CD8-positive, alpha-beta T cell (primary cell): ENCODE measurements at regions of chr11 and their contacts with region 1.

Region 1: GRCh38 chr11:42596576-42597145 is 715.1 kb upstream of the API5 start:
- DNase-seq: no peak
- ATAC-seq: no peak
- H3K4me3 ChIP-seq: no peak overlapping the region
- H3K4me3 Mint-ChIP-seq: no peak overlapping the region
- H3K27ac ChIP-seq: no peak overlapping the region
- H3K27ac Mint-ChIP-seq: no peak overlapping the region
- H3K4me1 ChIP-seq: no peaks in the 10 kb centered on the region
- H3K4me1 Mint-ChIP-seq: no peaks in the 10 kb centered on the region
- H3K27me3 ChIP-seq: no peaks in the 10 kb centered on the region
- H3K27me3 Mint-ChIP-seq: no peaks in the 10 kb centered on the region
- CTCF ChIP-seq: no peak

Region 2: GRCh38 chr11:42552786-42553185 is 43.9 kb before region 1 on chr11:
- CTCF ChIA-PET with region 1: no interaction called
- POLR2A ChIA-PET with region 1: no interaction called
- intact Hi-C with region 1: loop called in 1 of 2 experiments (anchors 5 kb)
- DNase-seq: no peak
- ATAC-seq: no peak
- H3K4me3 ChIP-seq: no peak overlapping the region
- H3K4me3 Mint-ChIP-seq: no peak overlapping the region
- H3K27ac ChIP-seq: no peak overlapping the region
- H3K27ac Mint-ChIP-seq: no peak overlapping the region
- H3K4me1 ChIP-seq: no peaks in the 10 kb centered on the region
- H3K4me1 Mint-ChIP-seq: no peaks in the 10 kb centered on the region
- H3K27me3 ChIP-seq: no peaks in the 10 kb centered on the region
- H3K27me3 Mint-ChIP-seq: no peaks in the 10 kb centered on the region
- CTCF ChIP-seq: no peak

Region 3: GRCh38 chr11:42631220-42631843 is 34.7 kb after region 1 on chr11:
- CTCF ChIA-PET with region 1: no interaction called
- POLR2A ChIA-PET with region 1: no interaction called
- intact Hi-C with region 1: no loop called
- DNase-seq: no peak
- ATAC-seq: no peak
- H3K4me3 ChIP-seq: no peak overlapping the region
- H3K4me3 Mint-ChIP-seq: no peak overlapping the region
- H3K27ac ChIP-seq: no peak overlapping the region
- H3K27ac Mint-ChIP-seq: no peak overlapping the region
- H3K4me1 ChIP-seq: no peaks in the 10 kb centered on the region
- H3K4me1 Mint-ChIP-seq: no peaks in the 10 kb centered on the region
- H3K27me3 ChIP-seq: no peaks in the 10 kb centered on the region
- H3K27me3 Mint-ChIP-seq: no peaks in the 10 kb centered on the region
- CTCF ChIP-seq: no peak

Region 4: DNA sequence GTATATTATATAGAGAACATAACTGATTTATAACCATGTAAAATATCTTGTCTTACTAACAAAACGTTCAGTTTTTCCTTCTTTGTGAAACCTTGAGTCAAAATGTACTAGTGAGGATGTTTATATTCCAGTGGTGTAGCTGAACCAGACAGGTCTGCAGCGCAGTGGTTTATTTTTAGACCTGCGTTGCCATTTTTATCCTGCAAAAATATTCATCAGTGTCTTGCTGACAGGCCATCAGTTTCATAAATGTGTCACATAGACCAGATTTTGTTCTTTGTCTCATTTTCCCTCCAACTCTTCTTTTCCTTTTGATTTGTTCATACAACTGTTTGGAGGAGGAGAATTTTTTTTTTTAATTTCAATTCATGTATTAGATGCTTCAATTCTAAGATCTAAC is 1127.0 kb after region 1 on chr11:
- CTCF ChIA-PET with region 1: no interaction called
- POLR2A ChIA-PET with region 1: no interaction called
- intact Hi-C with region 1: no loop called
- DNase-seq: no peak
- ATAC-seq: no peak
- H3K4me3 ChIP-seq: no peak overlapping the region
- H3K4me3 Mint-ChIP-seq: no peak overlapping the region
- H3K27ac ChIP-seq: no peak overlapping the region
- H3K27ac Mint-ChIP-seq: no peak overlapping the region
- H3K4me1 ChIP-seq: no peaks in the 10 kb centered on the region
- H3K4me1 Mint-ChIP-seq: peaks cover 3% of the 10 kb centered on the region
- H3K27me3 ChIP-seq: no peaks in the 10 kb centered on the region
- H3K27me3 Mint-ChIP-seq: no peaks in the 10 kb centered on the region
- CTCF ChIP-seq: no peak